MCF 10A (cell line): ENCODE measurements at regions of chr2 and their contacts with region 1.

Region 1: DNA sequence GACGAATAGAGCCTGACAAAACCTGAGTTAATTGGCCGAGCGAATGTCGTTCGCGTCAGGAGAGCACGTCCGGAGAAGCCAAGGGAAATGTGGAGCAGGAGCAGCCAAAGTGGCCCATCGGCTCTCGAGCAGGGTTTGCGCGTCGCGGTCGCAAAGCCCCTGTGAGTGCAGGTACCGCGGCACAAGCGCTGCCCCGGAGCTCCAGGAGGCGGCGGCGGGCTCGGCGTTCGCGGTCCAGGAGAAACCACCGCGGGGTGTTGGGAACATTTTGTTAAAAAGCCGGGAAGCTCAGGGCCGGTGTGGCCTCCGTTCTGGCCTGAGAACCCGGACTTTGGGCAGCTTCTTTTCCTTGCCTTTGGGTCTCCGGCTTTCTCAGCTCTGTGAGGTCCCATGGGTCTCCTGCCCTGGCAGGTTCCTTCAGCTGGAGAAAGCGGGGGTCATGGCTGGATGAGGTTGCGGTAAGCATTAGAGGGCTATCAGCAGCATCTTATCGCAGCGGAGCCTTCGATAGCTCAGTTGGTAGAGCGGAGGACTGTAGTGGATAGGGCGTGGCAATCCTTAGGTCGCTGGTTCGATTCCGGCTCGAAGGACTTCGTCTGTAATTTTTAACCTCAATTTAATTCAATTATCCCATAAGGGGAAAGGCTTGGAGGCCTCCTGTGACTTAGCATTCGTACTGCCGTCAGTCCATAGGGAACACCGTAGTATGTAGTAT is 1.0 kb upstream of the AGBL5 start:
- DNase-seq: peak; percentile 93
- H3K4me3 Mint-ChIP-seq: peak overlapping the region; percentile 93
- H3K27ac Mint-ChIP-seq: peak overlapping the region; percentile 84
- H3K4me1 Mint-ChIP-seq: no peaks in the 10 kb centered on the region
- H3K27me3 Mint-ChIP-seq: no peaks in the 10 kb centered on the region
- CTCF ChIP-seq: no peak

Region 2: GRCh38 chr2:26864226-26864625 is 186.2 kb before region 1 on chr2:
- CTCF ChIA-PET with region 1: no interaction called
- POLR2A ChIA-PET with region 1: no interaction called
- intact Hi-C with region 1: no loop called
- DNase-seq: no peak
- H3K4me3 Mint-ChIP-seq: no peak overlapping the region
- H3K27ac Mint-ChIP-seq: no peak overlapping the region
- H3K4me1 Mint-ChIP-seq: no peaks in the 10 kb centered on the region
- H3K27me3 Mint-ChIP-seq: peaks cover 88% of the 10 kb centered on the region
- CTCF ChIP-seq: no peak

Region 3: DNA sequence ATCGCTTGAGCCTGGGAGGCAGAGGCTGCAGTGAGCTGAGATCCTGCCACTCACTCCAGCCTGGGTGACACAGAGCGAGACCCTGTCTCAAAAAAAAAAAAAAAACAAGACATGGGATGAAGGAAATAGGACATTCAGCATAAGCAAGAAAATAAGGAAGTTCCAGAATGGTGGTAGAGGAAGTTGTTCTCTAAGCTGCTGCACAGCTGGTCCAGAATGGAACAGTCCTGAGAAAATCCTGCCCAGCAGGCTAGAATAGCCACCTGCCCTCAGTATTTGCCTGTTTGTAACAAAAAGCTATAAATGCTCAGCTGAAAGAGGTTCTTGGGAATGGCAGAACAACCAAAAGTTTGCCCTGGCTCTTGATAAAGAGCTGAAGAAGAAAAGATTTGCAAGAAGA is 91.1 kb before region 1 on chr2:
- CTCF ChIA-PET with region 1: interaction called, 6 read pairs
- POLR2A ChIA-PET with region 1: interaction called, 5 read pairs
- intact Hi-C with region 1: loop called (anchors 1 kb)
- DNase-seq: no peak
- H3K4me3 Mint-ChIP-seq: no peak overlapping the region
- H3K27ac Mint-ChIP-seq: no peak overlapping the region
- H3K4me1 Mint-ChIP-seq: no peaks in the 10 kb centered on the region
- H3K27me3 Mint-ChIP-seq: peaks cover 74% of the 10 kb centered on the region
- CTCF ChIP-seq: no peak

Region 4: DNA sequence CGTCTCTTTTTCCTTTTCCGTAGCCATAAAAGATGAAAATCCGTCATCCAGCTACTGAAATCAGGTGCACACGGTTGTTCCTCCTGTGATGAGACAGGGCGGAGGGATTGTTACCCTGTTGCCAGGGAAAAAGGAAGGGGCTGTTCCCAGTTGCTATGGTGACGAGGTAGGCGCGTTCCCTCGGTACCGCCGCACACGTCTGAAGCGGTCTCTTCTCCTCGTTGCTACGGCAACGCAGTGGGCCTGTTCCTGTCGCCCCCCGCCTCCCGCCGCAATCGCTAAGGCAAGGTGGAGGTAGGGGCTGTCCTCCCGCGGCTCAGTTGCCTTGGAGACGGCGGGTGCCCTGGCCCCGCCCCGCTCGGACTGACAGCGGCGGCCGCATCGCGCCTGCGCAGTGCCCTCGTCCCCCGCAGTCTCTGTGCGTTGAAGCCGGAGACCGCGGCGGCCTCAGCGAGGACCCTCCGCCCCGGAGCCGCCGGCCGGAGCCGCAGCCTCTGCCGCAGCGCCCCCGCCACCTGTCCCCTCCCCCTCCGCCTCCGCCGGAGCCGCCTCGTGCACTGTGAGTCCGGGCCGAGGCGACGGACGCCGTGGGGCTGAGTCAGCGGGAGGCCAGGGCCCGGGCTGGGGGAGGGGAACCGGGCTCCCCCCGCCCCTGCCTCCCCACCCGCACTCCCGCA is 80.1 kb before region 1 on chr2 and contains the start of gene MAPRE3:
- CTCF ChIA-PET with region 1: no interaction called
- POLR2A ChIA-PET with region 1: interaction called, 10 read pairs
- intact Hi-C with region 1: no loop called
- DNase-seq: peak; percentile 64
- H3K4me3 Mint-ChIP-seq: peak within 1 kb of the TSS; percentile 88
- H3K27ac Mint-ChIP-seq: peak within 1 kb of the TSS; percentile 80
- H3K4me1 Mint-ChIP-seq: peaks cover 23% of the 10 kb centered on the region
- H3K27me3 Mint-ChIP-seq: peaks cover 22% of the 10 kb centered on the region
- CTCF ChIP-seq: no peak
- total RNA-seq, gene MAPRE3: 18.0 and 26.0 TPM in 2 replicates

Region 5: DNA sequence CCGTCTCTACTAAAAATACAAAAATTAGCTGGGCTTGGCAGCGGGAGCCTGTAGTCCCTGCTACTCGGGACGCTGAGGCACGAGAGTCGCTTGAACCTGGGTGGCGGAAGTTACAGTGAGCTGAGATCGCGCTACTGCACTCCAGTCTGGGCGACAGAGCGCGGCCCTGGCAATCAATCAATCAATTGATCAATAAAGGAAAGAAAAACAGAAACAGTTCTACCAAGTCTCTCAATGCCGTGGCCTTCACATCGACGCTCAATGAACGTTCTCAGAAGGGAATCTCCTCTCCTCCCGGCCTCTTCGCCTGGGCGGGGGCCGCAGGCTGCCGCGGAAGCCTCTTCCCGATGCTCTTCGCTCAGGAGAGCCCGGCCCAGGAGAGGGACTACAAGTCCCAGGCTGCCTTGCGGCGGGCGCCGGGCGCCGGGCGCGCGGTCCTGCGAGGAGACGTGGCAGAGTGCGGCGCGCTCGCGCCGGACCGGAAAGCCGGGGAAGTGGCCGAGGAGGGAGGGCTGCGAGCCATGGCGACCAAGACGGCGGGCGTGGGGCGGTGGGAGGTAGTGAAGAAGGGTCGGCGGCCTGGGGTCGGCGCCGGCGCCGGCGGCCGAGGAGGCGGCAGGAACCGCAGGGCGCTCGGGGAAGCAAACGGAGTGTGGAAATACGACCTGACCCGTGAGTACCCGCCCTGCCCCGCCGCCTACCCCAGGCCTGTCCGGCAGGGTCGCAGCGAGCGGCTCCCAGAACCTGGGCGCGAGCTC is 17.8 kb before region 1 on chr2 and contains the start of gene TMEM214:
- CTCF ChIA-PET with region 1: interaction called, 4 read pairs
- POLR2A ChIA-PET with region 1: interaction called, 38 read pairs
- intact Hi-C with region 1: loop called (anchors 1 kb)
- DNase-seq: peak; percentile 86
- H3K4me3 Mint-ChIP-seq: peak within 1 kb of the TSS; percentile 96
- H3K27ac Mint-ChIP-seq: peak within 1 kb of the TSS; percentile 89
- H3K4me1 Mint-ChIP-seq: peaks cover 14% of the 10 kb centered on the region
- H3K27me3 Mint-ChIP-seq: no peaks in the 10 kb centered on the region
- CTCF ChIP-seq: no peak
- total RNA-seq, gene TMEM214: 118 and 138 TPM in 2 replicates

Region 6: DNA sequence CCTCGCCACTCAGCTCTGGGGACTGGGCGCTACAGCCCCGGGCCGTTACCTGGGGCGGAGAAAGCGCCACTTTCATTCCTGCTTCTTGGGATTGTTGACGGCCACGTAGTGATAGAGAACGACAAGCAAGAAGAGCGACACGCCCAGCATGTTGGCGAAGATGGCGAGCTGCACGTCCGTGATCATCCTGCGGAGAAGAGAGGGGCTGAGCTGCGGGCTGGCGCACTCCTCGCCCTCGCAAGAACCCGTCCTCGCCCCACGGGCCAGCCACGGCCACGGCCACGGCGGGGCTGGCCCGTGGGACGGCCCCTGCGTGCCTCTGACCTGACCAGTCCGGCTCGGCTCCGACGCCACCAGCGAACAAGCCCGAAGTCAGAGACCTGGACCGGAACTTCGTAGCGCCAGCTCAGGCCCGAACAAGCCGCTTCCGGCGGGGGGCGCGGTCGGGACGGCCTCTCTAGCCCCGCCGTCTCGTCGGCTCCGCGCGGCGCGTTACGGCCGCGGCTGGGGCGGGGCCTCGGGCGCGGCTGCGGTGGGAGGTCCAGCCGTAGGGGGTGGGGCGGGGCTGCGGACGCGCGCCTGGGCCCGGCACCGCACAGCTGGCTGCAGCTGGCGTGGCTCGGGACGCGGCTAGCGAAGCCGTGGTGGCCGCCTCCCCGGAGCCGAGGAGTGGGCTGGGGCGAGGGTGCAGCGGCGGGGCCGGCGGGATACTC is 21.0 kb after region 1 on chr2 and contains the start of gene OST4:
- CTCF ChIA-PET with region 1: interaction called, 4 read pairs
- POLR2A ChIA-PET with region 1: interaction called, 175 read pairs
- intact Hi-C with region 1: no loop called
- DNase-seq: peak; percentile 92
- H3K4me3 Mint-ChIP-seq: peak within 1 kb of the TSS; percentile 92
- H3K27ac Mint-ChIP-seq: peak within 1 kb of the TSS; percentile 93
- H3K4me1 Mint-ChIP-seq: peaks cover 10% of the 10 kb centered on the region
- H3K27me3 Mint-ChIP-seq: peaks cover 8% of the 10 kb centered on the region
- CTCF ChIP-seq: no peak
- total RNA-seq, gene OST4: 257 and 340 TPM in 2 replicates

Region 7: DNA sequence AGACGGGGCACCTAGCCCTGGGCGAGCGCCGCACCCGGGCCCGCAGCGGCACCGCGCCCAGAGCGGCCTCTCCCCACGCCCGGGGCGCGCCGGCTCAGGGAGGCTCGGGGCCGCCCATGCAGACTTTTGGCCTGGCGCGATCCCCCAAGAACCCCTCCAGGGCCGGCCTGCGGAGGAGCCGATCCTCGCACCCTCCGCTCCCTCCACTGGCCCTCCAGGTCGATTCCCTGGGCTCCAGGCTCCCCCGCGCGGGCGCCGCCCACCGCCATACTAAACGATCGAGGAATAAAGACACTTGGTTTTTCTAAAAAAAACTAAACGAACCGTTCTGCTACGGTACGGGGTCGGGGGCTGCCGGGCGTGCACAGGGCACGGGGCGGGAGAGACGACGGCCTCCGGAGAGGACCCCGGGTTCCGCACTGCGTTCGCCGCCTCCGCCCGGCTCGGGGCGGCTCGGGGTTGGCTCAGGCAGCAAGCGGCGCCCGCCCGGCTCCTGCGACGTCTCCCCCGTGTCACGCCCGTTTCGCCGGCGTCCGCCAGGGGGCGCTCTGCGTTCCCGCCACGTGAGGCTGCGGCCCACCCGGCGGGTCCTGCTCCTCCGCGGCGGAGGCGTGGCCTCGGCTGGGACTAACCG is 35.8 kb after region 1 on chr2:
- CTCF ChIA-PET with region 1: interaction called, 3 read pairs
- POLR2A ChIA-PET with region 1: interaction called, 12 read pairs
- intact Hi-C with region 1: loop called (anchors 2 kb)
- DNase-seq: peak; percentile 92
- H3K4me3 Mint-ChIP-seq: peak overlapping the region; percentile 75
- H3K27ac Mint-ChIP-seq: no peak overlapping the region
- H3K4me1 Mint-ChIP-seq: peaks cover 5% of the 10 kb centered on the region
- H3K27me3 Mint-ChIP-seq: no peaks in the 10 kb centered on the region
- CTCF ChIP-seq: peak; percentile 87

Region 8: GRCh38 chr2:27356382-27357181 is 306.1 kb after region 1 on chr2 and contains the start of gene GTF3C2:
- CTCF ChIA-PET with region 1: no interaction called
- POLR2A ChIA-PET with region 1: interaction called, 10 read pairs
- intact Hi-C with region 1: no loop called
- DNase-seq: peak; percentile 97
- H3K4me3 Mint-ChIP-seq: peak within 1 kb of the TSS; percentile 90
- H3K27ac Mint-ChIP-seq: peak within 1 kb of the TSS; percentile 93
- H3K4me1 Mint-ChIP-seq: peaks cover 31% of the 10 kb centered on the region
- H3K27me3 Mint-ChIP-seq: no peaks in the 10 kb centered on the region
- CTCF ChIP-seq: no peak
- total RNA-seq, gene GTF3C2: 47.5 and 47.8 TPM in 2 replicates